ENCODE measurements at regions of chr7 and their contacts with region 1.

Region 1: GRCh38 chr7:74656837-74657691 is 454 bp upstream of the GTF2I start:
- DNase-seq: peak; percentile 95
- ATAC-seq: peak; percentile 74
- H3K4me3 ChIP-seq: peak overlapping the region; percentile 80
- H3K27ac ChIP-seq: peak overlapping the region; percentile 96
- H3K4me1 ChIP-seq: peaks cover 22% of the 10 kb centered on the region
- H3K27me3 ChIP-seq: no peaks in the 10 kb centered on the region
- CTCF ChIP-seq: peak; percentile 40
- POLR2A ChIP-seq: peak; percentile 11; the same call in 1 of the 2 replicates
- RAD21 ChIP-seq: no peak

Region 2: GRCh38 chr7:74569501-74570075 is 87.5 kb before region 1 on chr7:
- CTCF ChIA-PET with region 1: no interaction called
- POLR2A ChIA-PET with region 1: no interaction called
- dilution Hi-C with region 1: no loop called
- in situ Hi-C with region 1: no loop called
- intact Hi-C with region 1: no loop called
- DNase-seq: no peak
- ATAC-seq: no peak
- H3K4me3 ChIP-seq: no peak overlapping the region
- H3K27ac ChIP-seq: no peak overlapping the region
- H3K4me1 ChIP-seq: no peaks in the 10 kb centered on the region
- H3K27me3 ChIP-seq: no peaks in the 10 kb centered on the region
- CTCF ChIP-seq: no peak
- POLR2A ChIP-seq: no peak
- RAD21 ChIP-seq: no peak

Region 3: GRCh38 chr7:74606101-74606908 is 50.8 kb before region 1 on chr7:
- CTCF ChIA-PET with region 1: no interaction called
- POLR2A ChIA-PET with region 1: no interaction called
- dilution Hi-C with region 1: no loop called
- in situ Hi-C with region 1: loop called (anchors 5 kb)
- intact Hi-C with region 1: no loop called
- DNase-seq: no peak
- ATAC-seq: peak; percentile 36
- H3K4me3 ChIP-seq: no peak overlapping the region
- H3K27ac ChIP-seq: no peak overlapping the region
- H3K4me1 ChIP-seq: peaks cover 5% of the 10 kb centered on the region; the same call in 1 of the 2 replicates
- H3K27me3 ChIP-seq: no peaks in the 10 kb centered on the region
- CTCF ChIP-seq: no peak
- POLR2A ChIP-seq: no peak
- RAD21 ChIP-seq: no peak

Region 4: DNA sequence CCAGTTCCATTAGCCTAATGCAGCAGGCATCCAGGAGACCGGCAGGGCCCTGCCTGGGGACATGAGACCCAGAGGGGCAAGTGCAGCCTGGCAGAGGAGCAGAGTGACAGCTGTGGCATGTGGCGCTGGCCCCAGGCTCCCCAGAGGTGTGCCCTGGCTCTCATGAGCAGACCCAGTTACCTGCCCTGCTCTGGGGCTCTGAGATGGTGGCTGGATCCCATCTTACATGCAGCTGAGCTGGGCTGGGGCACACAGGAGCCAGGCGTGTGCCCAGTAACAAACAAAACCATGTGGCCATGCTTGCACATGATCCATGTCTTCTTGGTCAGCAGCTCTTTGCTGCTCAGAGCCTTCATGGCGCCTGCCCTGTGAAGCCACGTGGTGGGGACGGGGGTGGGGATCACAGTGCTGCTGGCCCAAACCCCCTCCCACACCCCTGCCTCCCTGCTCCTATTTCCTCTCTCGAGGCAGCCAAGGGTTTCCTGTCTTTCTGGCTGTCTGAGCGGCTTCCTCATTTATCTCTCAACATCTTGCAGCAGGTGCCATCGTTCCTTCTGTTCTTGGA is 39.8 kb before region 1 on chr7:
- CTCF ChIA-PET with region 1: no interaction called
- POLR2A ChIA-PET with region 1: no interaction called
- dilution Hi-C with region 1: no loop called
- in situ Hi-C with region 1: no loop called
- intact Hi-C with region 1: loop called (anchors 5 kb)
- DNase-seq: no peak
- ATAC-seq: no peak
- H3K4me3 ChIP-seq: no peak overlapping the region
- H3K27ac ChIP-seq: no peak overlapping the region
- H3K4me1 ChIP-seq: no peaks in the 10 kb centered on the region; the same call in 1 of the 2 replicates
- H3K27me3 ChIP-seq: no peaks in the 10 kb centered on the region
- CTCF ChIP-seq: no peak
- POLR2A ChIP-seq: no peak
- RAD21 ChIP-seq: no peak

Region 5: DNA sequence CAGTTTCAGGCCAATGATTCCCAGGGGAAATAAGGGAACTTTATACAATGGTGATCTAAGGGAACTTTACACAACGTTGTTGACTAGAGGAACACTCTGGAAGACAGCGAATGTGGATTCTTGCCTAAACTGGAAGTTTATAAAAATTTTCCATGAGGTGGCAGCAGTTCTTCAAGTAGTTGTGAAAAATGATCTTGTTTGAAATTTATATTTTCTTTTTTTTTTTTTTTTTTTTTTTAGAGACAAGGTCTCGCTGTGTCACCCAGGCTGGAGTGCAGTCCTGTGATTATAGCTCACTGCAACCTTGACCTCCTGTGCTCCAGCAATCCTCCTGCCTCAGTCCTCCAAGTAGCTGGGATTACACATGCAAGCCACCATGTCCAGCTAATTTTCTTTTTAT is 31.6 kb before region 1 on chr7:
- CTCF ChIA-PET with region 1: no interaction called
- POLR2A ChIA-PET with region 1: no interaction called
- dilution Hi-C with region 1: no loop called
- in situ Hi-C with region 1: no loop called
- intact Hi-C with region 1: loop called (anchors 5 kb)
- DNase-seq: peak; percentile 67
- ATAC-seq: peak; percentile 38
- H3K4me3 ChIP-seq: no peak overlapping the region
- H3K27ac ChIP-seq: peak overlapping the region; percentile 12; the same call in 1 of the 2 replicates
- H3K4me1 ChIP-seq: peaks cover 3% of the 10 kb centered on the region
- H3K27me3 ChIP-seq: no peaks in the 10 kb centered on the region
- CTCF ChIP-seq: peak; percentile 41; the same call in 1 of the 2 replicates
- POLR2A ChIP-seq: no peak
- RAD21 ChIP-seq: peak; percentile 48

Region 6: GRCh38 chr7:74690474-74690873 is 33.4 kb after region 1 on chr7:
- CTCF ChIA-PET with region 1: interaction called, 10 read pairs
- POLR2A ChIA-PET with region 1: no interaction called
- dilution Hi-C with region 1: no loop called
- in situ Hi-C with region 1: no loop called
- intact Hi-C with region 1: no loop called
- DNase-seq: no peak
- ATAC-seq: no peak
- H3K4me3 ChIP-seq: no peak overlapping the region
- H3K27ac ChIP-seq: no peak overlapping the region
- H3K4me1 ChIP-seq: no peaks in the 10 kb centered on the region
- H3K27me3 ChIP-seq: no peaks in the 10 kb centered on the region
- CTCF ChIP-seq: no peak
- POLR2A ChIP-seq: no peak
- RAD21 ChIP-seq: no peak

Region 7: DNA sequence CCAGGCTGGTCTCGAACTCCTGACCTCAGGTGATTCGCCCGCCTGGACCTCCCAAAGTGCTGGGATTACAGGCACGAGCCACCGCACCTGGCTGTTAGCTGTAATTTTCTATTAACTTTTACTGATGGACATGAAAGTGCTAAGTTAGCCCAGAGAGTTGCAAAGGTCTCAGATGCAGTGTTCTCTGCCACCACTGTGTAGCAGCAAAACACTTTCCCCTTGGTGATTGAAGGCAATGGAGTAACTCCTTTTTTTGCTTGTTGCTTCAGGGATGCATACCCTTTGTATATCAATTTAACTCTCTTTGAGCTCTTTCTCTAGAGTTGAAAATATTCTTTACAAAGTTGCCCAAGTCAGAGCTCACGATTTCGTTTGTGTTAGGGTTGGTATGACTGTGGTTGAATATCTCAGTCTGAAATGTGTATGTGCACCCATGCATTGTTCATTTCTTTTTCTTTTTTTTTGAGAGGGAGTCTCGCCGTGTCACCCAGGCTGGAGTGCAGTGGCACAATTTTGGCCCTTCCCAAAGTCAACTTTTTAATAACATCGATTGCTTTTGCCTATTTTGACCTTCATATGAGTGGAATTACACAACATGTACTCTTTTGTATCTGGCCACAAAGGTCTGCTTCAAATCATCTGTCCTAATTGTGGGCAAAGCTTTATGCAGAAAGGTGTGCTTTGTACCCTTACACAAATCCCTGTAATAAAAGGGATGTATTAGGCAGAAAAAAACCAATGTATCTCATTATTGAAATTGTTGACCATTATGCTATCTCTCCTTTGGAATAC is 53.0 kb after region 1 on chr7:
- CTCF ChIA-PET with region 1: no interaction called
- POLR2A ChIA-PET with region 1: no interaction called
- dilution Hi-C with region 1: no loop called
- in situ Hi-C with region 1: no loop called
- intact Hi-C with region 1: loop called (anchors 5 kb)
- DNase-seq: peak; percentile 7
- ATAC-seq: no peak
- H3K4me3 ChIP-seq: no peak overlapping the region
- H3K27ac ChIP-seq: peak overlapping the region; percentile 25; the same call in 1 of the 2 replicates
- H3K4me1 ChIP-seq: peaks cover 7% of the 10 kb centered on the region
- H3K27me3 ChIP-seq: no peaks in the 10 kb centered on the region
- CTCF ChIP-seq: 0 out of 2 replicates have a peak, but pooled peaks have one; percentile 15
- POLR2A ChIP-seq: no peak
- RAD21 ChIP-seq: peak; percentile 24; the same call in 1 of the 2 replicates

Measured in IMR-90 (cell line).